Natural killer cell (primary cell): ENCODE measurements at regions of chr11 and their contacts with region 1.

Region 1: GRCh38 chr11:62705880-62706849 is 1.1 kb downstream of the BSCL2 start:
- DNase-seq: peak; percentile 93 to 97
- ATAC-seq: peak; percentile 74 to 87 (median 77)
- H3K4me3 ChIP-seq: peak overlapping the region; percentile 70
- H3K4me3 Mint-ChIP-seq: peak overlapping the region; percentile 94
- H3K27ac ChIP-seq: peak overlapping the region; percentile 89
- H3K27ac Mint-ChIP-seq: peak overlapping the region; percentile 91 to 97
- H3K4me1 ChIP-seq: peaks cover 50% of the 10 kb centered on the region
- H3K4me1 Mint-ChIP-seq: peaks cover 36 to 41% of the 10 kb centered on the region in 2 donors
- H3K27me3 ChIP-seq: no peaks in the 10 kb centered on the region
- H3K27me3 Mint-ChIP-seq: no peaks in the 10 kb centered on the region
- CTCF ChIP-seq: no peak

Region 2: DNA sequence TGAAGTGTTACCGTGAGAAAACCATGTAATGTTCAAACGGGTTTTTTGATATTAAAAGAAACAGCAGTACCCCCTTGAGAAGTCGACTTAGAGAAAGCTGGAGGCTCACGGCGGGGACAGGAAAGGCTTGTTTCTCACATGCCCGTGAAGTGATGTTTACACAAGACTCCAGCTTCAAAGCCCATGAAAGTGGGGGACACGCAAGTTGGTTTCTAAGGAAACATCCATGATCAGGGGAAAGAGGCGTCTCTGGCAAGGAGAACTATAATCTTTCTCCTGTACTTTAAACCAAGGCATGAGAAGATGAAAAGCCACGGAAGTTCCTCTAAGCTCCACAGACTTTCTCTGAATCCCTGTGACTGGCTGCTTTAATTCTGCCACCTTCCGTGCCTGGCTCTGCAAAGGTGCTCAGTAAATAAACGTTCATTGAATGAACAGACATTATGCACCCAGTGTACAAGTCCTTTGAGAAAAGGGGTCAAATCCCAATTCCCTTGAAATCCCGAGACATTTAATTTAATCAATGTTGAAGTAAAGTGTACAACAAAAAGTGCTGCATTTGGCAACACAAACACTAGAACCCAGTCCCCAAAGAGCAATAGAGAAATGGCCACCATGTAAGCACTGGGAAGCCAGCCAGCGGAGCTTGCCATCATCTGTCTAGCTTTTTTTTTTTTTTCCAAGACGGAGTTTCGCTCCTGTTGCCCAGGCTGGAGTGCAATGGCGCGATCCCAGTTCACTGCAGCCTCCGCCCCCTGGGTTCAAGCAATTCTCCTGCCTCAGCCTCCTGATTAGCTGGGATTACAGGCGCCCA is 218.2 kb before region 1 on chr11:
- intact Hi-C with region 1: no loop called
- DNase-seq: no peak
- ATAC-seq: no peak
- H3K4me3 ChIP-seq: no peak overlapping the region
- H3K4me3 Mint-ChIP-seq: no peak overlapping the region
- H3K27ac ChIP-seq: no peak overlapping the region
- H3K27ac Mint-ChIP-seq: no peak overlapping the region
- H3K4me1 ChIP-seq: no peaks in the 10 kb centered on the region
- H3K4me1 Mint-ChIP-seq: no peaks in the 10 kb centered on the region
- H3K27me3 ChIP-seq: no peaks in the 10 kb centered on the region
- H3K27me3 Mint-ChIP-seq: no peaks in the 10 kb centered on the region
- CTCF ChIP-seq: no peak

Region 3: DNA sequence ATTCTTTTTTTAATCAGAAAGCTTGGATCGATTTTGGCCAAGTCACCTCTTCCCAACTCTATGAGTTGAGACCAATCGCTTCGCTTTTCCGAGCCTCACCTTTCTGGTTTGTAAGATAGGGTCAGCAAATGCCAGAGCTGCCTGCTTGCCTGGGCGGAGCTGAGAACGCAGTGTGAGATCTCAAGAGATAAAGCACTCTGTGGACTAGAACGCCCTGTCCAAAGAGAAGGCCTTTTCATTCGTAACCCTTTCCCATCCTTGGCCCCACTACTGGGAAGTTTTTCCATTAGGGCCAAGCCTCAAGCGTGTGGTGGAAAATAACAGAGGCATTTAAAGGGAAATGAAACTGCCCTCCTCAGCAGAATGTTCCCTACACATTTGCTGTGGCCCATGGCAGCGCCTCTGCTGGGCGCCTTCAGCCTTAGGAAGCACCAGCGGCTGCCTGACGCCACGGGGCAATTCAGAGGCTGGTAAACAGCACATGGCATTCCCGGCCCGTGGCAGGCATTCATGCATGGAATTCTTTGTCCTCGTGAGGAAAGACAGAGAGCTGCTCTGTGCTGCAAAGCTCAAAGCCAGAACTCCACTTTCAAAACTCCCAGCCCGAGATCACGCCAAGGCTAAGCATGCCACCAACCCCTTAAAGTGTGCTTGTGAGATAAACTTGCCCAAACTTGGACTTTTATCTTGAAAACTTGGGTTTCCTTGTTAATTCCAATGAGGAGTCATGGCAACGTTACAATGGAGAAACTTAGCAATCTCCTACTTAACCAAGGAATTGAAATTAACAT is 197.7 kb before region 1 on chr11:
- intact Hi-C with region 1: no loop called
- DNase-seq: no peak
- ATAC-seq: peak; percentile 32 to 48 (median 43)
- H3K4me3 ChIP-seq: no peak overlapping the region
- H3K4me3 Mint-ChIP-seq: no peak overlapping the region
- H3K27ac ChIP-seq: no peak overlapping the region
- H3K27ac Mint-ChIP-seq: no peak overlapping the region
- H3K4me1 ChIP-seq: peaks cover 10% of the 10 kb centered on the region
- H3K4me1 Mint-ChIP-seq: peaks cover 11 to 16% of the 10 kb centered on the region in 2 donors
- H3K27me3 ChIP-seq: no peaks in the 10 kb centered on the region
- H3K27me3 Mint-ChIP-seq: peaks cover 0 to 3% of the 10 kb centered on the region in 2 donors
- CTCF ChIP-seq: no peak

Region 4: DNA sequence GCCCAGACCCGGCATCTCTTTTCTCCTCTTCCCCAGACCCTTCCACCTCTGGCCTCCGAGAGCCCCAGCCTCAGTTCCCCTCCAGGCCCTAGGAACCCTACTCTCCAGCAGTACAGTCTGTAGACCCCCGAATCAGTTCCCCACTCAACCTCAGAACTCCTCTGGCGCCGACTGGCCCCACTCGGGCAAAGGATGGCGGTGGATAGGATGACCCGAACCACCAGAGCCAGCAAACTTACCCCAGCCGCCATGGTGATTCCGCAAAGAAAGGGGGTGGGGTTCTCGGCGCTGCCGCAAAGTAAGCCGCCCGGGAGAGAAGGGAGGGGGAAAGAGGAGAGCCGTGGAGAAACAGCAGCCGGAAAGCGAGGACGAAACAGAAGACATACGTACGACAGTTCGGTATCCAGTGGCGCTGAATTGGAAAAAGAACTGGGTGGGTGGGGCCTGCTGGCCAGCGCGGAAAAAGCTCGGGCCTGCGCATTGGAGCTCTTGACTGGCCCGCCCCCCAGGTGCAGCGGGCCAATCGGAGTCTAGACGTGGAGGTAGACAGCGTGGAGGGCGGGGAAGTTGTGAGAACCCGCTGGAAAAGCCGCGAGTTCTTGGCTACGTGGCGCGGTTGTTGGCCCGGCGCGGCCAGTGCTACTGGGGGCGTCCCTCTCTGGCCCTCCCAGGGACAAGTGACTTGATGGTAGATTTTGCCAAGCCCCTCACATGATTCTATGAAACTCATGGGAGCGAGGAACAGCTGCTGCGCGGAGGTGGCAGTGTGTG is 132.4 kb before region 1 on chr11 and contains the start of gene EEF1G:
- intact Hi-C with region 1: loop called (anchors 5 kb)
- DNase-seq: peak; percentile 95 to 99
- ATAC-seq: peak; percentile 94 to 98 (median 94)
- H3K4me3 ChIP-seq: peak within 1 kb of the TSS; percentile 94
- H3K4me3 Mint-ChIP-seq: peak within 1 kb of the TSS; percentile 99
- H3K27ac ChIP-seq: peak within 1 kb of the TSS; percentile 80
- H3K27ac Mint-ChIP-seq: peak within 1 kb of the TSS; percentile 92 to 95
- H3K4me1 ChIP-seq: peaks cover 27% of the 10 kb centered on the region
- H3K4me1 Mint-ChIP-seq: peaks cover 36 to 54% of the 10 kb centered on the region in 2 donors
- H3K27me3 ChIP-seq: no peaks in the 10 kb centered on the region
- H3K27me3 Mint-ChIP-seq: no peaks in the 10 kb centered on the region
- CTCF ChIP-seq: no peak
- total RNA-seq, gene EEF1G: 628 to 754 (median 714) TPM

Region 5: DNA sequence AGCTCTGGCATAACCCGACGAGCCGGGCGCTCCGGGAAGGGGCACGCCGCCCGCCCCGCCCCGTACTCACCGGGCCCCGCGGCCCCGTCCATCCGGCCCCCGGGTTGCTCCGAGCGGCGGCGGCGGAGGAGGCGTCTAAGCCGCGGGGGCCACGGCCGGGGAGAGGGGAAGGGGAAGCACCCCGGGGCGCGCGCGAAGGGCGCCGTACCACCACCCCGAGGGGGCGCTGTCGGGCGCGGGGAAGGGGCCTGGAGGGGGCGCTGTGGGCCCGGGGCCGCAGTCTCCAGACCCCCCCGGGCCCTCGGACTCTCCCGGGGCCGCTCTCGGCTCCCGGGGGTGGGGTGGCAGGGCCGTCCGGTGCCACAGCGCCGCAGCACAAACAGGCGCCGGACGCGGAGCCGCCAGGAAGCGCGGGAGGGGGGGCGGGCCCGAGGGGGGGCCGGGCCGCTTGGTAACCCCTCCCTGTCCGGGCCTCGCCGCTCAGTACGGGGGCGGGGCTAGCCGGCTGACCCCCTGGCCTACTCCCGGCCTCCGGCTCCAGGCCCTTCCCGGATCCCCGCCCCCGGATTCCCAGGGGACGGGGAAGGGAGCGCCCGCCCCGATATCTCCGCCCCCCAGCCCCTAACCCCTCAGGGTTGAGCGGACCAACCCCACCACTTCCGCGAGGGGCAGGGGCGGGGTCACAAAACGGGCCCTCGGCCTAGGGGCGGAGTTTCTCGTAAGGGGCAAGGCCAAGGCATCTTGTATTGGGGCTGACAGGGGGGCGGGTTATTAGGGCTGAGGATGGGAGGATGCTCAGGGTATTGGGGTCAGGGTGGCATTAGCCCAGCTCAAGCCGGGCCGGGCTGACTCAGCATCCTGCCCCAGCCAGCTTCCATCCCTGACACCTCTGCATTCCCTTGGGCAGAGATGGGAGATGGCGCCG is 93.5 kb before region 1 on chr11 and contains the starts of genes EML3 and ROM1:
- intact Hi-C with region 1: loop called (anchors 5 kb)
- DNase-seq: peak; percentile 86 to 91
- ATAC-seq: peak; percentile 75 to 89 (median 76)
- H3K4me3 ChIP-seq: peak within 1 kb of the TSS; percentile 64
- H3K4me3 Mint-ChIP-seq: peak within 1 kb of the TSS; percentile 96
- H3K27ac ChIP-seq: peak within 1 kb of the TSS; percentile 89
- H3K27ac Mint-ChIP-seq: peak within 1 kb of the TSS; percentile 95 to 98
- H3K4me1 ChIP-seq: peaks cover 27% of the 10 kb centered on the region
- H3K4me1 Mint-ChIP-seq: peaks cover 18 to 52% of the 10 kb centered on the region in 2 donors
- H3K27me3 ChIP-seq: no peaks in the 10 kb centered on the region
- H3K27me3 Mint-ChIP-seq: no peaks in the 10 kb centered on the region
- CTCF ChIP-seq: peak; percentile 97
- total RNA-seq, gene EML3: 221 to 233 (median 232) TPM
- total RNA-seq, gene ROM1: 2.6 to 6.9 (median 3.9) TPM

Region 6: GRCh38 chr11:62652161-62653006 is 53.8 kb before region 1 on chr11:
- intact Hi-C with region 1: no loop called
- DNase-seq: peak in 1 of 2 donors; percentile 44
- ATAC-seq: peak in 2 of 3 donors; percentile 2 to 6
- H3K4me3 ChIP-seq: peak overlapping the region; percentile 90
- H3K4me3 Mint-ChIP-seq: peak overlapping the region; percentile 99
- H3K27ac ChIP-seq: peak overlapping the region; percentile 83
- H3K27ac Mint-ChIP-seq: peak overlapping the region; percentile 98 to 99
- H3K4me1 ChIP-seq: peaks cover 24% of the 10 kb centered on the region
- H3K4me1 Mint-ChIP-seq: peaks cover 15 to 17% of the 10 kb centered on the region in 2 donors
- H3K27me3 ChIP-seq: no peaks in the 10 kb centered on the region
- H3K27me3 Mint-ChIP-seq: peaks cover 0 to 3% of the 10 kb centered on the region in 2 donors
- CTCF ChIP-seq: no peak

Region 7: DNA sequence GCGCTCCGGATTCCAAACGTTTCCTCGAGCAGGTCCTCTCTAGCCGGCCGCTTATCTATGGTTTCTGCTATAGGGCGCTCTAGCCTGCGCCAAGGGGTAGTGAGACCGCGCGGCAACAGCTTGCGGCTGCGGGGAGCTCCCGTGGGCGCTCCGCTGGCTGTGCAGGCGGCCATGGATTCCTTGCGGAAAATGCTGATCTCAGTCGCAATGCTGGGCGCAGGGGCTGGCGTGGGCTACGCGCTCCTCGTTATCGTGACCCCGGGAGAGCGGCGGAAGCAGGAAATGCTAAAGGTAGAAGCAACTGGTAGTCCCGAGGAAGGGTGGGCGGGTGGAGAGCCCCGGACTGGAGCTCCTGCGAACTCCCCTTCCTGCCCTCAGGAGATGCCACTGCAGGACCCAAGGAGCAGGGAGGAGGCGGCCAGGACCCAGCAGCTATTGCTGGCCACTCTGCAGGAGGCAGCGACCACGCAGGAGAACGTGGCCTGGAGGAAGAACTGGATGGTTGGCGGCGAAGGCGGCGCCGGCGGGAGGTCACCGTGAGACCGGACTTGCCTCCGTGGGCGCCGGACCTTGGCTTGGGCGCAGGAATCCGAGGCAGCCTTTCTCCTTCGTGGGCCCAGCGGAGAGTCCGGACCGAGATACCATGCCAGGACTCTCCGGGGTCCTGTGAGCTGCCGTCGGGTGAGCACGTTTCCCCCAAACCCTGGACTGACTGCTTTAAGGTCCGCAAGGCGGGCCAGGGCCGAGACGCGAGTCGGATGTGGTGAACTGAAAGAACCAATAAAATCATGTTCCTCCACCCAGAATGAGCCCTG is 34.4 kb before region 1 on chr11 and contains the starts of genes LBHD1 and UQCC3:
- intact Hi-C with region 1: loop called (anchors 5 kb)
- DNase-seq: peak; percentile 76 to 85
- ATAC-seq: peak; percentile 78 to 93 (median 86)
- H3K4me3 ChIP-seq: peak within 1 kb of the TSS; percentile 85
- H3K4me3 Mint-ChIP-seq: peak within 1 kb of the TSS; percentile 99
- H3K27ac ChIP-seq: peak within 1 kb of the TSS; percentile 59
- H3K27ac Mint-ChIP-seq: peak within 1 kb of the TSS; percentile 92 to 97
- H3K4me1 ChIP-seq: peaks cover 28% of the 10 kb centered on the region
- H3K4me1 Mint-ChIP-seq: peaks cover 21 to 36% of the 10 kb centered on the region in 2 donors
- H3K27me3 ChIP-seq: no peaks in the 10 kb centered on the region
- H3K27me3 Mint-ChIP-seq: no peaks in the 10 kb centered on the region
- CTCF ChIP-seq: no peak
- total RNA-seq, gene LBHD1: 17.4 to 29.1 (median 20.4) TPM
- total RNA-seq, gene UQCC3: 3.9 to 5.2 (median 4.0) TPM

Region 8: DNA sequence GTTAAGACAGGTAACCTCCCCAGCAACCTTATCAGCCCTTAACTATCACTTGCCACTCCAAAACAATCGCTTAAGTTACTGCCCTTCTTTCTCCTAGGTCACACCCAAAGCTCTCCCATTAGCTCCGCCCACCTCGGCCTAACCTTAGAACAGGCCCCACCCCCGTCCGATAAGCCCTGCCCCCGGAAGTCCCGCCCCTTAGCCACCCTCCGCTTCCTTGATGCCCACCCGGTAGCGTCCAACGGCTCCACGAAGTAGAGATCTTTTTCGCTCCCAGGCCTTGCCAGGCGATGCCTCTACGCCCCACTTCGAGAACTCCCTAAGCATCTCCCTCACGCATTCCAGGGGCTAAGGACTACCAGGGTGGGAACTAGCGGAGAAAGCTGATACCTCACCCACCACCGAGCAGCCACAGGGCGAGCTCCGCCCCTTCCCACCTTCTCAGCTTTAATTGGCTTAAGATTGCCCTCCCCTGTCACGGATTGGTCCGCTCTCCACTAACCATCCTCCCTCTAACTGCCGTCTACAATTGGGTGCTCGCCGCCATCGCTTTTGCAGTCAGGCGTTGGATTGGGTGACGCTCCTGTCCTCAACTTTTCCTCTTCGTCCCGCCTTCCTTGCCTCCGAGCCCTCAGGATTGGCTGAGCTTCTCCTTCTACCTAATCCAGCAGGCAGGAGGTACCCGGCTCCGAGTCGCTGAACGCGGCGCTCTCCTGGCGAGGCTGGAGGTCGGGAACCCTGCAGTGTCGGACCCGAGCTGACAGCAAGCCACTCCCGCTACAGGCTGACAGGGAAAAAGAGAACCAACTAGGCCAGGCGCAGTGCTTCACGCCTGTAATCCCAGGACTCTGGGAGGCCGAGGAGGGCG is 47.8 kb after region 1 on chr11 and contains the start of gene ZBTB3:
- intact Hi-C with region 1: loop called (anchors 1 kb)
- DNase-seq: peak; percentile 93 to 99
- ATAC-seq: peak; percentile 92 to 98 (median 94)
- H3K4me3 ChIP-seq: peak within 1 kb of the TSS; percentile 83
- H3K4me3 Mint-ChIP-seq: peak within 1 kb of the TSS; percentile 96
- H3K27ac ChIP-seq: peak within 1 kb of the TSS; percentile 81
- H3K27ac Mint-ChIP-seq: peak within 1 kb of the TSS; percentile 91 to 96
- H3K4me1 ChIP-seq: peaks cover 22% of the 10 kb centered on the region
- H3K4me1 Mint-ChIP-seq: peaks cover 9 to 10% of the 10 kb centered on the region in 2 donors
- H3K27me3 ChIP-seq: no peaks in the 10 kb centered on the region
- H3K27me3 Mint-ChIP-seq: no peaks in the 10 kb centered on the region
- CTCF ChIP-seq: no peak
- total RNA-seq, gene ZBTB3: 5.4 to 9.6 (median 8.8) TPM